ENCODE measurements at regions of chr4 and their contacts with region 1.

Region 1: GRCh38 chr4:147617173-147617840 is at the start of gene TMEM184C:
- DNase-seq: peak; percentile 100
- H3K4me3 Mint-ChIP-seq: peak within 1 kb of the TSS; percentile 89
- H3K27ac Mint-ChIP-seq: peak within 1 kb of the TSS; percentile 93
- H3K4me1 Mint-ChIP-seq: peaks cover 23% of the 10 kb centered on the region
- H3K27me3 Mint-ChIP-seq: no peaks in the 10 kb centered on the region
- total RNA-seq, gene TMEM184C: 11.5 to 12.5 TPM

Region 2: GRCh38 chr4:146458594-146458993 is 1158.7 kb before region 1 on chr4:
- CTCF ChIA-PET with region 1: no interaction called
- intact Hi-C with region 1: loop called (anchors 1 kb)
- DNase-seq: peak; percentile 15
- H3K4me3 Mint-ChIP-seq: peak overlapping the region; percentile 63
- H3K27ac Mint-ChIP-seq: peak overlapping the region; percentile 91
- H3K4me1 Mint-ChIP-seq: peaks cover 32% of the 10 kb centered on the region
- H3K27me3 Mint-ChIP-seq: no peaks in the 10 kb centered on the region

Region 3: DNA sequence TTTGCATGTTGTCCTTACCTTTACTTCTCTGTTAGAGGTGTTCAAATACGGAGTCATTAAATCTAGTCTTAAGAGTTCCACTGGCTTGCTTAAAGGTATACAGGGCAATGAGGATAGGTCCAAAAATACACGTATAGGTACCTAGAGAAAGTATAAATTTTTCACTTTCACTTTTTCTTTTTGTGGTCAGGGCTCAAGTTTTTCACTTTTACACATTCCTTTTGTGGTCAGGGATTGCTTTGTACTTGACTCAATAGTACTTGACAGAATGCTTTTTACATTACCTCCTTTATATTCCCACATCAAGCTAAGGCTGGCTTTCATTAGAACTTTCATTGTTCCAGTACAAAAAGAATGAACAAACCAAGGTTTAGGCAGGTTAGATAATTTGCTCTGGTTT is 21.6 kb after region 1 on chr4:
- CTCF ChIA-PET with region 1: interaction called, 4 read pairs
- intact Hi-C with region 1: loop called (anchors 2 kb)
- DNase-seq: no peak
- H3K4me3 Mint-ChIP-seq: no peak overlapping the region
- H3K27ac Mint-ChIP-seq: peak overlapping the region; percentile 18
- H3K4me1 Mint-ChIP-seq: peaks cover 21% of the 10 kb centered on the region
- H3K27me3 Mint-ChIP-seq: no peaks in the 10 kb centered on the region

Region 4: GRCh38 chr4:147683717-147684700 is 66.7 kb after region 1 on chr4 and contains the start of gene PRMT9:
- CTCF ChIA-PET with region 1: no interaction called
- intact Hi-C with region 1: loop called (anchors 1 kb)
- DNase-seq: peak; percentile 91
- H3K4me3 Mint-ChIP-seq: peak within 1 kb of the TSS; percentile 90
- H3K27ac Mint-ChIP-seq: peak within 1 kb of the TSS; percentile 91
- H3K4me1 Mint-ChIP-seq: peaks cover 19% of the 10 kb centered on the region
- H3K27me3 Mint-ChIP-seq: no peaks in the 10 kb centered on the region
- total RNA-seq, gene PRMT9: 7.3 to 8.2 TPM